Body of pancreas (tissue), 4 donors: ENCODE measurements at regions of chr9 and their contacts with region 1.

Region 1: DNA sequence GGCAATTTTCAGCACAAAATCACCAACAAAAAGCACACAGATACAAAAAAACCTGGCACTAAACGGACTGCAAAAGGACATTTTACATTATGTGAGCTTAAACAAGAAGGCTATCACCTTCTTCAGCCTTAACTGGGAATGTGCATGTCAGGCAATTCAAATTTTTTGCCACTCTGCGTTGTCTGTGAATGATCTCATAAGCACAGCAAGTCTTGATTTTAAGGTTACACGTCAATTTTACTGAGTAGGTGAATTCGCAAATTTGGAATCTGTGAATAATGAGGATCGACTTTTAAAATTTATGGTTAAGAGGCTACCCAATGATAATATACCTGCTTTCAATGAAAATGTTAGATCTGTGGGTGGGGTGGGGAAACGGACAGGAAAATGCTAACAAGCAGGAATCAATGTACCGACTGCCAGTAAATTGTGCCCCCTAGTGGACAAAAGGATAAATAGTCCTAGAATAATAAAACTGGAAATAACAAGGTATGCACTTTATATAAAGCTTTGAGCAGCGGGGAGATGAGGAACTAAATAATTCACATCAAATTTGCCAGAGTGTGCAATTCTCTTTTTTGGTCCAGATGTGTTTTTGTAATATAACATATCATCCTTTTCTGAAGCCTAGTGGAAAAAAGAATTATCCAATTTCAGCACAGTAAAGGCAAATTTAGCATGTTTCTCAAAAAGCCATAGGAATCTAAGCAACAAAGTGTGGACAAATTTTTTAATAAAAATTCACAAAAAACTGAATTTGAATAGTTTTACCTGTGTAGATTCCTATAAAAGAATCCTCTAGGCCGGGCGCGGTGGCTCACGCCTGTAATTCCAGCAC is 20.5 kb downstream of the EQTN start:
- DNase-seq: peak in 2 of 4 donors; percentile 9 to 13
- ATAC-seq: peak; percentile 55
- H3K4me3 ChIP-seq: no peak overlapping the region
- H3K27ac ChIP-seq: no peak overlapping the region
- H3K4me1 ChIP-seq: no peaks in the 10 kb centered on the region
- H3K27me3 ChIP-seq: no peaks in the 10 kb centered on the region
- CTCF ChIP-seq: peak; percentile 36 to 85 (median 70)
- POLR2A ChIP-seq: no peak

Region 2: GRCh38 chr9:27033823-27034403 is 242.5 kb before region 1 on chr9:
- intact Hi-C with region 1: loop called (anchors 10 kb)
- DNase-seq: peak; percentile 35 to 60 (median 38)
- ATAC-seq: peak; percentile 24
- H3K4me3 ChIP-seq: no peak overlapping the region
- H3K27ac ChIP-seq: no peak overlapping the region
- H3K4me1 ChIP-seq: no peaks in the 10 kb centered on the region
- H3K27me3 ChIP-seq: no peaks in the 10 kb centered on the region
- CTCF ChIP-seq: peak; percentile 50 to 74 (median 57)
- POLR2A ChIP-seq: no peak

Region 3: DNA sequence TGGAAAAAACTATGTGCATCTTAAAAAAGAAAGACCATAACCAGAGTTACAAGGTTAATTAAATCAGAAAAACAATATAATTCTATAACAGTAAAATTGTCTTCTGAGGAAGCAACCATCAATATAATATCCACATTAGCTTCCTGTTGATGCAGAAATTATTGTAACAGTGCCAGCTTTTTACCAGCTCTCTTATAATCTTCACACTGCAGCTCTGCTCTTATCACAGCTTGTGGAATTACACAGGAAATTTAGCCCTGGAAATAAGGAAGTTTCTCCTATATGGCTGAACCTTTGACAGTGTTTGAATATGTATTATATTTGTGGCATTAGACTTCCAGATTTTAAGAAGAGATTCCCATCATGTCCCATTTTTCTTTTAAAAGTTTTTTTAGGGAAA is 216.5 kb before region 1 on chr9:
- intact Hi-C with region 1: no loop called
- DNase-seq: no peak
- ATAC-seq: no peak
- H3K4me3 ChIP-seq: no peak overlapping the region
- H3K27ac ChIP-seq: no peak overlapping the region
- H3K4me1 ChIP-seq: no peaks in the 10 kb centered on the region
- H3K27me3 ChIP-seq: no peaks in the 10 kb centered on the region
- CTCF ChIP-seq: no peak
- POLR2A ChIP-seq: no peak